Activated CD4-positive, alpha-beta T cell treated with anti-CD3 and anti-CD28 coated beads for 36 hours (primary cell): ENCODE measurements at regions of chr1 and their contacts with region 1.

Region 1: DNA sequence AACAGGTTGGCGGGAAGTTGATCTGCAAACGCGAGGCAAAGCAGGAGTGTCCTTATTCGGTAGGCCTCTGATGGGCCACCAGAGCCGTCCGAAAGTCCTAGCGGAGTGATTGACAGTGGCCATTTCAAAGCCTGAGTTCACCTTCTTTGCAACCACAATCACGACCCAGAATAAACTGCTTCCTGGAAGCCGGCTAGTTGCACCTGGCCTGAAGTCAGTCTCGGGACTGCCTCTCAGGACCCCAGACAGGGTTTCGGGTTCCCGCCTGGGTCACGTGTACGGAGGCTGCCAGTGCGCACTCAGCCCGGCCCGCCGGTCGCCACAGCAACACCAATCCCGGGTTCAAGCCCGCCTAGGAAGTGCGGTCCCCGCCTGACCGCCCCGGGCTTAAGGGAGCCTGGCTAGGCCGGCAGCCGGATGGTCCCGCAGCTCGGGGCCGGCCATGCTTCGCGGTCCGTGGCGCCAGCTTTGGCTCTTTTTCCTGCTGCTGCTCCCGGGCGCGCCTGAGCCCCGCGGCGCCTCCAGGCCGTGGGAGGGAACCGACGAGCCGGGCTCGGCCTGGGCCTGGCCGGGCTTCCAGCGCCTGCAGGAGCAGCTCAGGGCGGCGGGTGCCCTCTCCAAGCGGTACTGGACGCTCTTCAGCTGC is at the start of gene TOR3A:
- DNase-seq: peak; percentile 87
- ATAC-seq: peak; percentile 78
- H3K4me3 Mint-ChIP-seq: peak within 1 kb of the TSS; percentile 94
- H3K27ac Mint-ChIP-seq: peak within 1 kb of the TSS; percentile 94
- H3K4me1 Mint-ChIP-seq: peaks cover 24% of the 10 kb centered on the region
- H3K27me3 Mint-ChIP-seq: no peaks in the 10 kb centered on the region
- total RNA-seq, gene TOR3A: 29.4 TPM

Region 2: GRCh38 chr1:178693366-178693765 is 388.4 kb before region 1 on chr1:
- CTCF ChIA-PET with region 1: no interaction called
- POLR2A ChIA-PET with region 1: no interaction called
- intact Hi-C with region 1: no loop called
- DNase-seq: no peak
- ATAC-seq: no peak
- H3K4me3 Mint-ChIP-seq: no peak overlapping the region
- H3K27ac Mint-ChIP-seq: no peak overlapping the region
- H3K4me1 Mint-ChIP-seq: no peaks in the 10 kb centered on the region
- H3K27me3 Mint-ChIP-seq: no peaks in the 10 kb centered on the region

Region 3: GRCh38 chr1:178768423-178768822 is 313.4 kb before region 1 on chr1:
- CTCF ChIA-PET with region 1: no interaction called
- POLR2A ChIA-PET with region 1: no interaction called
- intact Hi-C with region 1: loop called in 1 of 2 experiments (anchors 5 kb)
- DNase-seq: peak; percentile 28
- ATAC-seq: peak; percentile 53
- H3K4me3 Mint-ChIP-seq: no peak overlapping the region
- H3K27ac Mint-ChIP-seq: no peak overlapping the region
- H3K4me1 Mint-ChIP-seq: no peaks in the 10 kb centered on the region
- H3K27me3 Mint-ChIP-seq: no peaks in the 10 kb centered on the region

Region 4: DNA sequence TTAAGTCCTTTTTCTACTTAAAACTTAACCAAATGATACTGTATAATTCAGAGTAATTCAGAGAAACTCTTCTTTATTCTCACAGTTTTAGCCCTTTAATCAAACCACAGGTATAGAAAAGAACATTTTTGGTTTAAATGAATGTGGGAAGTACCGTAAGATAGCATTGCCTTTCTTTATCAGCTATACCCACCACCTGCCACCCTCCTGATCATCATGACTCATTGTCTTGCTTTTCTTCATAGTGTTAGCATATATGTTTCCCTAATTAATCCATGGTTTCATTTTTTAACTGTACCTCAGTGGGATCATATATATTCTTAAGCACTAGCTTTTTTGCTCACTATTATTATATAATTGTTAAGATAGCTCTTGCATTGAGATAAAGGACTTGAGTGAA is 183.4 kb before region 1 on chr1:
- CTCF ChIA-PET with region 1: no interaction called
- POLR2A ChIA-PET with region 1: no interaction called
- intact Hi-C with region 1: no loop called
- DNase-seq: no peak
- ATAC-seq: no peak
- H3K4me3 Mint-ChIP-seq: no peak overlapping the region
- H3K27ac Mint-ChIP-seq: no peak overlapping the region
- H3K4me1 Mint-ChIP-seq: no peaks in the 10 kb centered on the region
- H3K27me3 Mint-ChIP-seq: no peaks in the 10 kb centered on the region

Region 5: DNA sequence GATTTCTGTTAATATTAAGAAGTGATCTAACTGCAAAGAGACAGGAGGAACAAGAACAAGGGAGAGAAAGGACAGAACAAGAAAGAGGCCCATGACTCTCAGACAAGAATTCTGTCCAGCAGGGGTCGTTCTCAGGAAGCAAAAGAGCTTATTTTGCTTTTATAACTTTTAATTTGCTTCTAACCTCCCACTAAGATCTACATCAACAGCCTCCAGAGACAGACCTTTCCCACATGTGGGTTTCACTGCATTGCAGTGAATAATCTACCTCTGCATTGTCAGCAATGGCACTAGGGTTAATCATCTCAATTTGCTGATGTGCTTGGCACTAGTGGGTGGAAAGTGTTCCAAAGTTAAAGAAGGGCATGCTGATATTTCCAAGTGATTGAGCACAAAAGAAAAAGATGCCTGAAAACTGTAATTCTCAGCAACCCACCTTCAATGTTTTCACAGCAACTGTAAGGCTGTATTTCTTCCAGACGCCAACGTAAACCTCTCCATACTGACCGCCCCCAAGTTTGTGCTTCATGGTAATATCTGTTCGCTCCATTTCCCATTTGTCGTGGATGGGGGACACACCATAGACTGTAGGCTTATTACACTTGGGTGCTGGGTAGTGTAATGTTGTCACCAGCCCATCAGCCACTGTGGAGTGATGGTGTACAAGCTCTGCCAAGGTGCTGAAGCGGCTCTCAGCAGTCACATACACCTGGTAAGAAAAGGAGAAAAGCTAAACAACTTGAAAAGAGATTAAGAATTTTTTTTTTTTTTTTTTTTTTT is 39.5 kb after region 1 on chr1:
- CTCF ChIA-PET with region 1: interaction called, 10 read pairs
- POLR2A ChIA-PET with region 1: no interaction called
- intact Hi-C with region 1: loop called (anchors 1 to 2 kb)
- DNase-seq: peak; percentile 64
- ATAC-seq: peak; percentile 69
- H3K4me3 Mint-ChIP-seq: no peak overlapping the region
- H3K27ac Mint-ChIP-seq: no peak overlapping the region
- H3K4me1 Mint-ChIP-seq: peaks cover 6% of the 10 kb centered on the region
- H3K27me3 Mint-ChIP-seq: no peaks in the 10 kb centered on the region

Region 6: DNA sequence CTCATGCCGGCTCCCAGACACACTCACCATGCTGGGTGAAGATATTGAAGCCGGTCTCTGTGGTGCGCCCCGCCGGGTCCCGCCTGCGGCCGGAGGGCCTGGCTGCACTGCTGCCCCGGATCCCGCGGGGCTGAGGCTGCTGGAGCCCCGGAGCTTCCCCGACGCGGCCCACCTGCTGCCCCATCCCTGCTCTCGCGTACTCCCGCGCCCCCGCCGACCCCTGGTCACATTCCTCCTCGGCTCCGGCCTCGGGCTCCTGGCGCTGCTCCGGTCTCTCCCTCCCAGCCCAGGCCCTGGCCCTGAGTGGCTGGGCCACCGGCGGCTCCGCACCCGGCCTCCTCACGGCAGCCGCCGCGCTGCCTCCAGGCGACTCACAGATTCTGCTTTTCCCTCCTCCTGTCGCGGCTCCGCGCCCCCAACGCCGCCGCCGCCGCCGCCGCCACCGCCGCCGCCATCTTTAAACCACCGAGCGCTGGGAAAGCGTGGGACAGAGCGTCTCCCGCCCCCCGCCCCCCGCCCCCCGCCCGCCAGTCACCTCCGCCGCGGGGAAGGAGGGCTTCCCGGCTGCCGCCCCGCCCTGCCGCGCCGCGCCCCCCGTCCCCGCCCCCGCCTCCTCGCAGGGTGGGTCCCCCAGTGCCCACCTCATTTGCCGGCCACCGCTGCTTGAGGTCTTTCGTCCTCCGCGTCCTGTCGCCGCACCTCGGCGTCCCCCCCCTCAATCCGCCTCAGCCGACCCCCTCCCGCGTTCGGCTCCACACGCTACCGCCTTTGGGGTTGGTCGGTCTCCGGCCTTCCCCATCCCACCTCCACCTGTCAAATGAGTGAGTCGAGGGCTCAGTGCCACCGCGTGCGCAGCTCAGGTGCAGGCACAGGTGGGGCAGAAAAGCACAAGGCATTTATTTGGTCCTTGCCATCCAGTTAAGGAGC is 147.7 kb after region 1 on chr1 and contains the start of gene ABL2:
- CTCF ChIA-PET with region 1: interaction called, 3 read pairs
- POLR2A ChIA-PET with region 1: no interaction called
- intact Hi-C with region 1: loop called (anchors 1 to 2 kb)
- DNase-seq: peak; percentile 71
- ATAC-seq: peak; percentile 21
- H3K4me3 Mint-ChIP-seq: peak within 1 kb of the TSS; percentile 86
- H3K27ac Mint-ChIP-seq: peak within 1 kb of the TSS; percentile 88
- H3K4me1 Mint-ChIP-seq: peaks cover 36% of the 10 kb centered on the region
- H3K27me3 Mint-ChIP-seq: no peaks in the 10 kb centered on the region
- total RNA-seq, gene ABL2: 6.6 to 8.4 TPM

Region 7: DNA sequence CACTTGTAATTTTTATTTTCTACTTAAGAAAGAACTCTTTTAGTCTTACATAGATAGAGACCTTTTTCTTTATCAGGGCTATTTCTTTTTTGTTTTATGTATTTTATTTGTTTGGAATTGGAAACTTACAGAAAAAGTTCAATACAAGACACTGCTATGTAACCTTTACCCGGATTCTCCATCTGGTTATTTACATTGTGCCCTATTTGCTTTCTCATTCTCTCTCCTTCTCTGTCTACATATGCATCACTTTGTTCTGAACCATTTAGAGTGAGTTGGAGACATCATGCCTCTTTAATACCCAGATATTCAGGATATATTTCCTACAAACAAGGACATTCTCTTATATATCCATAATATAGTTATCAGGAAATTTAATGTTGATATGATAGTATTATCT is 302.2 kb after region 1 on chr1:
- CTCF ChIA-PET with region 1: no interaction called
- POLR2A ChIA-PET with region 1: interaction called, 14 read pairs
- intact Hi-C with region 1: no loop called
- DNase-seq: no peak
- ATAC-seq: no peak
- H3K4me3 Mint-ChIP-seq: no peak overlapping the region
- H3K27ac Mint-ChIP-seq: no peak overlapping the region
- H3K4me1 Mint-ChIP-seq: no peaks in the 10 kb centered on the region
- H3K27me3 Mint-ChIP-seq: no peaks in the 10 kb centered on the region

Region 8: DNA sequence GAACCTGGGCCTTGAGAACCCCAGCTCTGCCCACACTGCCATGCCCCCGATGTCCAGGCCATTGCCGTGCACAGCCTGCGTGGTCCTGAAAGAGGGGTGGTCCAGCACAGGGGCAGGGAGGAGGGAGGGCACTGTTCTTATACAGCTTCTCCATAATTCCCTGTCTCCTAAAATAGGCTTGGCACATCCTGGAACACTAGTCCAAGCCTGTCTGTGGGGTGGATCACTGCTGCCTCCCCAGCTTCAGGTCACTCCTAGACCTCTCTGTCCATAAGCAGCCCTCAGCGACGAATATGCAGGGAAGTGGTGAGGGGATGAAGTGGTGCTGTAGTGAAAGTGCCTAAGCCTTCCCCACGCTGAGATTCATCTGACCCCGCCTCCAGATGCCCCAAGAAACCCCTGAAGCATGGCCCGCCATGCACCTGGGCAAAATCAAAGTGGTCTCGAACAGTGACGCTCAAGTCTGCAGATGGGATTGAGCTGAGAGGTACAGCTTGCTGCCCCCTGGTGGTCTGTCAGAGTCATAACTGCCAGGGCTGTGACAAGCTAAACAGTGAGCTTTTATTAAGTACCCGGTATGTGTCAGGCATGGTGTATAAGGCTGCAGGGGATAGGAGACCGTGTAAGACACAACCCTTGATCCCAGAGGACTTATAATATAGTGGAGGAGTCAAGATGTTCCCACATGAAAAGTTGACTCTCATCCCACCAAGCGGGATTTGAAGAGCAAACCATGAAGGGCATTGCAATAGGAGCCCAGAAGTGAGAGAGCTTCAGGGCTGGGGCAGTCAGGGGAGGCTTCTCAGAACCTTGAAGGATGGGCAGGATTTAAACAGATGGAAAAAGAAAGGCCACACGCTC is 727.9 kb after region 1 on chr1:
- CTCF ChIA-PET with region 1: interaction called, 5 read pairs
- POLR2A ChIA-PET with region 1: no interaction called
- intact Hi-C with region 1: loop called (anchors 1 to 10 kb)
- DNase-seq: peak; percentile 80
- ATAC-seq: peak; percentile 65
- H3K4me3 Mint-ChIP-seq: no peak overlapping the region
- H3K27ac Mint-ChIP-seq: no peak overlapping the region
- H3K4me1 Mint-ChIP-seq: peaks cover 11% of the 10 kb centered on the region
- H3K27me3 Mint-ChIP-seq: peaks cover 2% of the 10 kb centered on the region